ENCODE measurements at regions of chr7 and their contacts with region 1.

Region 1: DNA sequence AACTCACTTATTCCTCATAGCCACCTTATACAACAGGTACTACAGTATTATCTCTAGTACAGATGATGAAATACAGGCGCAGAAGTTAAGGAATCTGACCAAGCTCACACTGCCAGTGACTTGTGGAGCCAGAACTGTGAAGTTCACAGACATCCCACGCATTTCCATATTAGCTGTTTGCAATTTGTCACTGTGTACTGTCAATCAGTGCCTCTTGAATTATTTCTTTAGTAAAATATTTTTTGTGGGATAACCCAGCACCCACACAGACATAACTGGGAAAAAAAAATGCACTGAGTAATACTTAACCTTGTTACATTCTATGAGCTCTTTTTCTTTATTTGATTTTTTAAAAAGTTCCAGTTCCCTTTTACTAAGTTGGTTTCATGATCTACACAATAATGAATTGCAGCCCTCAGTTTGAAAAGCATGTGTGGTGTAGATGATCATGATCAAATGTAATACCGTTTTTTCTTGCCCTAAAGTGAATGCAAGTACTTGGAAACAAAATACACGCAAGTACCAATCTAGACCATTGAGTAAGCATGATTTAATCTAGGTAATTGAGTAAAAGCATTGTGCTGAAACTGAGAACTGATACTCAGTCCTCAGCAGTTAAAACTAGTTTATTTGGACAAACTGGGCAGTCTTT is 14.1 kb downstream of the CUL1 start:
- DNase-seq: no peak
- H3K4me3 ChIP-seq: no peak overlapping the region
- H3K27ac ChIP-seq: no peak overlapping the region
- H3K4me1 ChIP-seq: peaks cover 0 to 7% (median 4%) of the 10 kb centered on the region in 4 experiments; a peak in 4 of 7 replicates
- H3K27me3 ChIP-seq: no peaks in the 10 kb centered on the region
- CTCF ChIP-seq: no peak
- EP300 ChIP-seq: no peak
- POLR2A ChIP-seq: no peak
- RAD21 ChIP-seq: no peak

Region 2: GRCh38 chr7:148645898-148646297 is 66.9 kb before region 1 on chr7:
- CTCF ChIA-PET with region 1: no interaction called
- POLR2A ChIA-PET with region 1: no interaction called
- DNase-seq: no peak
- H3K4me3 ChIP-seq: no peak overlapping the region
- H3K27ac ChIP-seq: no peak overlapping the region
- H3K4me1 ChIP-seq: no peaks in the 10 kb centered on the region
- H3K27me3 ChIP-seq: no peaks in the 10 kb centered on the region
- CTCF ChIP-seq: no peak
- EP300 ChIP-seq: no peak
- POLR2A ChIP-seq: no peak
- RAD21 ChIP-seq: no peak

Region 3: GRCh38 chr7:148698397-148699023 is 14.3 kb before region 1 on chr7 and contains the start of gene CUL1:
- CTCF ChIA-PET with region 1: interaction called, 5 read pairs
- POLR2A ChIA-PET with region 1: interaction called, 17 read pairs
- DNase-seq: peak; percentile 29 to 82
- H3K4me3 ChIP-seq: peak within 1 kb of the TSS; percentile 80 to 89 (median 82)
- H3K27ac ChIP-seq: peak within 1 kb of the TSS; percentile 94
- H3K4me1 ChIP-seq: peaks cover 2 to 20% (median 11%) of the 10 kb centered on the region in 4 experiments; a peak in 6 of 7 replicates
- H3K27me3 ChIP-seq: no peaks in the 10 kb centered on the region
- CTCF ChIP-seq: no peak
- EP300 ChIP-seq: no peak
- POLR2A ChIP-seq: peak in 1 of 2 experiments; percentile 87; a peak in 1 of 3 replicates
- RAD21 ChIP-seq: no peak
- total RNA-seq, gene CUL1: 76.1 and 77.3 TPM in 2 replicates

Measured in H1 (cell line).